ENCODE measurements at regions of chr18 and their contacts with region 1.

Region 1: DNA sequence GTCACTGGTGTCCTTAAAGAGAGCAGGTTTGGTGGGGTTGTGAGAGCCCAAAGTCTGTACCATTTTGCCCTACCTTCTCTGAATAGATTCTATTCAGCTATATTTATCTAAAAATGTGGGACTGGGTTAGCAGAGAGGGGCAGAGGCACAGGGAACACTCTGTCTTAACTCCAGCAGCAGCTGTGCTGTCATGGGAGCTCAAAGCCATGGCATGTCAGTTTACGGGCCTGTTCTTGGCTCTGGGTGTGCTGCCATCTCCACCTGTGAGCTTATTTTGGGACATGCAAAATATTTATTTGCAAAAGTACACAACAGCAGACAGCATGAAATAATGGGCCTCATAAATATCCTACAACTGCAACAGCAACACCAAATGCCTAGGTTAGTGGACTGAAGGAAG is 129.6 kb upstream of the KCTD1 start:
- DNase-seq: no peak
- ATAC-seq: no peak

Region 2: GRCh38 chr18:26771524-26771923 is 93.6 kb after region 1 on chr18:
- intact Hi-C with region 1: loop called (anchors 10 kb)
- DNase-seq: no peak
- ATAC-seq: no peak

Measured in left ventricle myocardium superior (tissue), 1 donor.